ENCODE measurements at regions of chr20 and their contacts with region 1.

Region 1: GRCh38 chr20:21559305-21559704 is 45.4 kb upstream of the NKX2-2 start:
- DNase-seq: peak; percentile 75
- H3K4me3 Mint-ChIP-seq: peak overlapping the region; percentile 72
- H3K27ac Mint-ChIP-seq: peak overlapping the region; percentile 67
- H3K4me1 Mint-ChIP-seq: peaks cover 27% of the 10 kb centered on the region
- H3K27me3 Mint-ChIP-seq: peaks cover 10% of the 10 kb centered on the region

Region 2: GRCh38 chr20:20498076-20498861 is 1061.0 kb before region 1 on chr20:
- intact Hi-C with region 1: loop called (anchors 5 kb)
- DNase-seq: peak; percentile 48
- H3K4me3 Mint-ChIP-seq: no peak overlapping the region
- H3K27ac Mint-ChIP-seq: peak overlapping the region; percentile 94
- H3K4me1 Mint-ChIP-seq: peaks cover 53% of the 10 kb centered on the region
- H3K27me3 Mint-ChIP-seq: no peaks in the 10 kb centered on the region

Region 3: DNA sequence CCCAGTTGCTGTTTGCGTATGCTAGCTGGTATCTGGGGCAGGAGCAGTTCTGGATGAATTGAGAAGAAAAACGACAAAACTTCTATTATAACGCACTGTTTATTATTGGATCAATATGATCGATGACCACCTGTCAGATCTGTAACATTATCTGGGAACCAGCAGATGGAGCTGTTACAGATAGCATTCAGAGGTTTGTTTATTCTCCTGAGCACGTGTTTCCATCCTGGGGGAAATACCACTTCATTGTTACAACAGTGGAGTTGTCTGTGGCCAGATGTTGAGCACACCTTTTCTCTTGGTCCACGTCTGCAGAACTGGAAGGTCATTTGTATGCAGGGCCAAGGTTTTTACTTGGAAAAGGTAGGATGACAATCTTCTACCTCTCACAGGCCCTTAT is 29.4 kb before region 1 on chr20:
- intact Hi-C with region 1: loop called (anchors 1 kb)
- DNase-seq: no peak
- H3K4me3 Mint-ChIP-seq: no peak overlapping the region
- H3K27ac Mint-ChIP-seq: no peak overlapping the region
- H3K4me1 Mint-ChIP-seq: peaks cover 2% of the 10 kb centered on the region
- H3K27me3 Mint-ChIP-seq: peaks cover 60% of the 10 kb centered on the region

Region 4: GRCh38 chr20:21548390-21549035 is 10.8 kb before region 1 on chr20:
- intact Hi-C with region 1: loop called (anchors 1 kb)
- DNase-seq: peak; percentile 86
- H3K4me3 Mint-ChIP-seq: peak overlapping the region; percentile 52
- H3K27ac Mint-ChIP-seq: peak overlapping the region; percentile 78
- H3K4me1 Mint-ChIP-seq: peaks cover 22% of the 10 kb centered on the region
- H3K27me3 Mint-ChIP-seq: no peaks in the 10 kb centered on the region

Measured in activated CD4-positive, alpha-beta T cell treated with anti-CD3 and anti-CD28 coated beads, Interleukin-2, amount 10 ng/mL, durations not matched to agents 24 days and 14 days (primary cell).